Calu3 (cell line): ENCODE measurements at regions of chr5 and their contacts with region 1.

Region 1: DNA sequence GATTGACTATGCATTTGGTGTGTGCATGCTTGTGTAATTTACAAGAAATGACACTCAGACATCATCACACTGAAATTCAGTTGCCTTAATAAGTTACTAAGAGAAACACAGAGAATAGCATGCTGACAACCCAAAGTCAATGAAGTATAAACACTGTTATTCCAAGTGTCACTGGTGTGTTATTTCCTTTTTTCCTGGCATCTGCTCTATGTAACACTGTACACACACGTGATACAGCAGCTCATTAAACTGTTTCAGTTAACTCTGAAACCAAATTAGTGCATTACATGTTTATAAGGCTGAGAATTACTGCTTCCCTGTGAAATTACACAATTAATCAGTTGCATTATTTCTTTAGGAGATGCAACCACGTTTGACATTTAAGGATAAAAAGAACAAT is 252.7 kb downstream of the EFNA5 start:
- DNase-seq: no peak
- H3K4me3 Mint-ChIP-seq: peak overlapping the region; percentile 13
- H3K27ac Mint-ChIP-seq: peak overlapping the region; percentile 41
- H3K4me1 Mint-ChIP-seq: peaks cover 83% of the 10 kb centered on the region
- H3K27me3 Mint-ChIP-seq: no peaks in the 10 kb centered on the region
- CTCF ChIP-seq: no peak

Region 2: DNA sequence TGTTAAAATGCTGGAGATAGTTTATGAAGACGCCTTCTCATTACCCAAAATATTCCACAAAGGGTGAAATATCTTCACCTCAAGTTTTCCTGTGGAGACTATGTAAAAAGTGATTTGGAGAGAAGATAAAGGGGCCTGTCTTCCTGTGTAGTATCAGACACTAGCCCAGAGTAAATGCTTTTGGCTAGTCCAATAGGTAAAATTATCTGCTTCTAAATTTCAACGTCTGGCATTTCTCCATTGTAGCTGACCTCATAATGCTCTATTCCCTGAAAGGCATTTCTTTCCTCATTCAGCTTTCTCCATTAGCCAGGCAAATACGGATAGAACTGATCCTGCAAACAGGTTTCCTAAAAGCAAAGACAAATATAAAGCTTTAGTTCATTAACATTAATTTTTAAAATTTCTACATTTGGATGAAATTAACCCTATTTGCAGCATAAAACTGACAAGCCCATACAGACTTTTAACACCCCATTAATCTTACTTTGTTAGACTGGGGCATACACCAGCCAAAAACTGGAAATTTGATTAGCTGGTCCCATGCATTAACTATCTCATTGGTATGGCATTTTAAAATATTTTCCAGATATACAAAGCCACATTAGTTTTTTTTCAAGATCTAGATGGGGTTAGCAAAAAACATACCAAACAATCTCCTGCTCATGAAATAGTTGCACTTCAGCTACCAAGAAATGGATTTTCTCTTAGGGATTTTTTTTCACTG is 296.1 kb before region 1 on chr5:
- CTCF ChIA-PET with region 1: no interaction called
- intact Hi-C with region 1: no loop called
- DNase-seq: no peak
- H3K4me3 Mint-ChIP-seq: no peak overlapping the region
- H3K27ac Mint-ChIP-seq: no peak overlapping the region
- H3K4me1 Mint-ChIP-seq: no peaks in the 10 kb centered on the region
- H3K27me3 Mint-ChIP-seq: no peaks in the 10 kb centered on the region
- CTCF ChIP-seq: no peak

Region 3: GRCh38 chr5:107469485-107470294 is 51.6 kb after region 1 on chr5:
- CTCF ChIA-PET with region 1: interaction called, 6 read pairs
- intact Hi-C with region 1: loop called (anchors 5 kb)
- DNase-seq: peak; percentile 66
- H3K4me3 Mint-ChIP-seq: peak overlapping the region; percentile 45
- H3K27ac Mint-ChIP-seq: peak overlapping the region; percentile 96
- H3K4me1 Mint-ChIP-seq: peaks cover 95% of the 10 kb centered on the region
- H3K27me3 Mint-ChIP-seq: no peaks in the 10 kb centered on the region
- CTCF ChIP-seq: no peak